ENCODE measurements at regions of chr7 and their contacts with region 1.

Region 1: GRCh38 chr7:44044315-44045225 is at the start of gene DBNL:
- DNase-seq: peak; percentile 68 to 91 (median 83)
- ATAC-seq: peak; percentile 67 to 71 (median 69)
- H3K4me3 ChIP-seq: peak within 1 kb of the TSS; percentile 87 to 95
- H3K4me3 Mint-ChIP-seq: peak within 1 kb of the TSS; percentile 84 to 89 (median 86)
- H3K27ac ChIP-seq: peak within 1 kb of the TSS; percentile 76
- H3K27ac Mint-ChIP-seq: peak within 1 kb of the TSS; percentile 95 to 96
- H3K4me1 ChIP-seq: peaks cover 27 to 62% of the 10 kb centered on the region in 2 experiments
- H3K4me1 Mint-ChIP-seq: peaks cover 46 to 59% (median 51%) of the 10 kb centered on the region in 3 donors
- H3K27me3 ChIP-seq: no peaks in the 10 kb centered on the region
- H3K27me3 Mint-ChIP-seq: no peaks in the 10 kb centered on the region
- total RNA-seq, gene DBNL: 101 to 188 (median 156) TPM

Region 2: DNA sequence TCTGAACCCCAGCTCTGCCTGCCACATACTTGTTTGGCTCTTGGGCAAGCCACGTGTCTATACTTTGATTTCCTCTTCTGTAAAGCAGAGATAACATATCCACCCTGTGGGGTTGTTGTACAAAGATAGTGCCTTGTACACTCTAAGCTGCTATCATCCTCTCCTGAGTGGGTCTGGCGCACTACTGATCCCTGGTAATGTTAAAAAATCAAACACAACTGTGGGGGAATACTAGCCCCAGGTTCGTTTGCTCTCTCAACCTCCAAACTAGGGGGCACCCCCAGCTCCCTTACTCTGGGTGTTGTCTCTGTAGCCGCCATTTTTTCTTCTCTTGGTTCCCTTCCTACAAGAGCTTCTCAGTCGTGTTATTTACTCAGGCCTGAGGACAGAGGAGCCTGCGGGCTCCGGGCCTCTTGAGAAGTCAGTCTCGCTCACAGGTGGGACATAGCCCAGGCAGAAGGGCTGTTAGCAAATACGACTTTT is 36.7 kb after region 1 on chr7:
- CTCF ChIA-PET with region 1: interaction called in 1 of 2 experiments, 11 read pairs
- POLR2A ChIA-PET with region 1: no interaction called
- DNase-seq: peak in 9 of 35 experiments; percentile 11 to 59 (median 37)
- ATAC-seq: no peak
- H3K4me3 ChIP-seq: peak overlapping the region; percentile 45 to 74
- H3K4me3 Mint-ChIP-seq: peak overlapping the region; percentile 86 to 91 (median 90)
- H3K27ac ChIP-seq: peak overlapping the region; percentile 73
- H3K27ac Mint-ChIP-seq: peak overlapping the region; percentile 89 to 93
- H3K4me1 ChIP-seq: peaks cover 4 to 53% of the 10 kb centered on the region in 2 experiments
- H3K4me1 Mint-ChIP-seq: peaks cover 32 to 42% (median 33%) of the 10 kb centered on the region in 3 donors
- H3K27me3 ChIP-seq: no peaks in the 10 kb centered on the region
- H3K27me3 Mint-ChIP-seq: no peaks in the 10 kb centered on the region

Measured in T-cell (primary cell).